ENCODE measurements at regions of chr11 and their contacts with region 1.

Region 1: GRCh38 chr11:63671322-63672155 is at the start of gene ATL3:
- DNase-seq: peak; percentile 91 to 98
- H3K4me3 ChIP-seq: peak within 1 kb of the TSS; percentile 93
- H3K27ac ChIP-seq: peak within 1 kb of the TSS; percentile 63
- H3K4me1 ChIP-seq: peaks cover 47% of the 10 kb centered on the region
- H3K27me3 ChIP-seq: no peaks in the 10 kb centered on the region
- CTCF ChIP-seq: 0 out of 2 replicates have a peak, but pooled peaks have one; percentile 24
- total RNA-seq, gene ATL3: 78.5 and 98.3 TPM in 2 replicates

Region 2: GRCh38 chr11:63508009-63508408 is 163.5 kb before region 1 on chr11:
- CTCF ChIA-PET with region 1: interaction called, 14 read pairs
- POLR2A ChIA-PET with region 1: no interaction called
- intact Hi-C with region 1: no loop called
- DNase-seq: peak; percentile 42 to 44
- H3K4me3 ChIP-seq: no peak overlapping the region
- H3K27ac ChIP-seq: no peak overlapping the region
- H3K4me1 ChIP-seq: no peaks in the 10 kb centered on the region
- H3K27me3 ChIP-seq: no peaks in the 10 kb centered on the region
- CTCF ChIP-seq: peak; percentile 52; the same call in 1 of the 2 replicates

Region 3: GRCh38 chr11:63608351-63609038 is 63.0 kb before region 1 on chr11:
- CTCF ChIA-PET with region 1: no interaction called
- POLR2A ChIA-PET with region 1: interaction called, 3 read pairs
- intact Hi-C with region 1: loop called (anchors 5 kb)
- DNase-seq: peak; percentile 70 to 92
- H3K4me3 ChIP-seq: peak overlapping the region; percentile 33; the same call in 1 of the 2 replicates
- H3K27ac ChIP-seq: peak overlapping the region; percentile 89
- H3K4me1 ChIP-seq: peaks cover 64% of the 10 kb centered on the region
- H3K27me3 ChIP-seq: no peaks in the 10 kb centered on the region
- CTCF ChIP-seq: no peak

Region 4: DNA sequence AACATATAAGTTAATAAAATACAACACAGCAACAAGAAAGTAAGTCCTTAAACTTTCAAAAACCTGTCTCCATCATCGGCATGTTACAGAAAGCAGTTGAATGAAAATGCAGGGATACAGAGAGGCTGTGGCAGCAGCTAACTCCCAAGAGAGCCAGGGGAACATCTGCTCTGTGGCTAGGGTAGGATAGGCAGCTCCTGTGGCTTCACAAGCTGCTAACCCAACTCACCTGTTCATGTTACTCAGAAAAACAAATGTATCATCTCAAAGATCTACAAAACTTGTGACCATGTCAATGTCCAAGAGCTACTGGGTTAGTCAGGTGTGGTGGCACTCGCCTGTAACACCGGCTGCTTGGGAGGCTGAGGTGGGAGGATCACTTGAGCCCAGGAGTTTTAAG is 42.1 kb before region 1 on chr11:
- CTCF ChIA-PET with region 1: no interaction called
- POLR2A ChIA-PET with region 1: no interaction called
- intact Hi-C with region 1: no loop called
- DNase-seq: no peak
- H3K4me3 ChIP-seq: no peak overlapping the region
- H3K27ac ChIP-seq: no peak overlapping the region
- H3K4me1 ChIP-seq: no peaks in the 10 kb centered on the region
- H3K27me3 ChIP-seq: no peaks in the 10 kb centered on the region
- CTCF ChIP-seq: no peak

Region 5: GRCh38 chr11:63660972-63661371 is 10.6 kb before region 1 on chr11:
- CTCF ChIA-PET with region 1: interaction called, 3 read pairs
- POLR2A ChIA-PET with region 1: interaction called, 31 read pairs
- intact Hi-C with region 1: no loop called
- DNase-seq: peak in 1 of 2 experiments; percentile 15
- H3K4me3 ChIP-seq: no peak overlapping the region
- H3K27ac ChIP-seq: no peak overlapping the region
- H3K4me1 ChIP-seq: peaks cover 12% of the 10 kb centered on the region
- H3K27me3 ChIP-seq: no peaks in the 10 kb centered on the region
- CTCF ChIP-seq: no peak

Region 6: GRCh38 chr11:63738720-63739360 is 67.3 kb after region 1 on chr11:
- CTCF ChIA-PET with region 1: interaction called, 4 read pairs
- POLR2A ChIA-PET with region 1: no interaction called
- intact Hi-C with region 1: loop called (anchors 5 kb)
- DNase-seq: peak; percentile 67 to 73
- H3K4me3 ChIP-seq: no peak overlapping the region
- H3K27ac ChIP-seq: peak overlapping the region; percentile 18; the same call in 1 of the 2 replicates
- H3K4me1 ChIP-seq: 0 out of 2 replicates have a peak, but pooled peaks cover 3% of the 10 kb centered on the region
- H3K27me3 ChIP-seq: no peaks in the 10 kb centered on the region
- CTCF ChIP-seq: peak; percentile 99

Region 7: GRCh38 chr11:63779039-63779438 is 107.5 kb after region 1 on chr11:
- CTCF ChIA-PET with region 1: no interaction called
- POLR2A ChIA-PET with region 1: interaction called, 11 read pairs
- intact Hi-C with region 1: no loop called
- DNase-seq: no peak
- H3K4me3 ChIP-seq: no peak overlapping the region
- H3K27ac ChIP-seq: no peak overlapping the region
- H3K4me1 ChIP-seq: no peaks in the 10 kb centered on the region
- H3K27me3 ChIP-seq: no peaks in the 10 kb centered on the region
- CTCF ChIP-seq: no peak

Region 8: GRCh38 chr11:63938479-63939396 is 267.2 kb after region 1 on chr11 and contains the start of gene NAA40:
- CTCF ChIA-PET with region 1: no interaction called
- POLR2A ChIA-PET with region 1: no interaction called
- intact Hi-C with region 1: loop called (anchors 10 kb)
- DNase-seq: peak; percentile 97 to 99
- H3K4me3 ChIP-seq: peak within 1 kb of the TSS; percentile 77
- H3K27ac ChIP-seq: peak within 1 kb of the TSS; percentile 83
- H3K4me1 ChIP-seq: peaks cover 44% of the 10 kb centered on the region
- H3K27me3 ChIP-seq: no peaks in the 10 kb centered on the region
- CTCF ChIP-seq: no peak
- total RNA-seq, gene NAA40: 47.4 and 50.4 TPM in 2 replicates

Measured in PC-9 (cell line).